Ascending aorta (tissue), 2 donors: ENCODE measurements at regions of chr12 and their contacts with region 1.

Region 1: GRCh38 chr12:79420146-79420618 is 270.6 kb downstream of the PAWR start:
- DNase-seq: no peak
- H3K4me3 ChIP-seq: no peak overlapping the region
- H3K27ac ChIP-seq: peak overlapping the region; percentile 38 to 68
- H3K4me1 ChIP-seq: peaks cover 6 to 23% of the 10 kb centered on the region in 2 donors
- H3K27me3 ChIP-seq: no peaks in the 10 kb centered on the region
- CTCF ChIP-seq: peak; percentile 56 to 62 (median 59)

Region 2: GRCh38 chr12:79451978-79452377 is 31.8 kb after region 1 on chr12:
- intact Hi-C with region 1: loop called (anchors 1 kb)
- DNase-seq: peak; percentile 49 to 79
- H3K4me3 ChIP-seq: peak overlapping the region; percentile 27 to 29
- H3K27ac ChIP-seq: peak overlapping the region; percentile 32 to 62
- H3K4me1 ChIP-seq: peaks cover 3 to 26% of the 10 kb centered on the region in 2 donors
- H3K27me3 ChIP-seq: no peaks in the 10 kb centered on the region
- CTCF ChIP-seq: no peak

Region 3: DNA sequence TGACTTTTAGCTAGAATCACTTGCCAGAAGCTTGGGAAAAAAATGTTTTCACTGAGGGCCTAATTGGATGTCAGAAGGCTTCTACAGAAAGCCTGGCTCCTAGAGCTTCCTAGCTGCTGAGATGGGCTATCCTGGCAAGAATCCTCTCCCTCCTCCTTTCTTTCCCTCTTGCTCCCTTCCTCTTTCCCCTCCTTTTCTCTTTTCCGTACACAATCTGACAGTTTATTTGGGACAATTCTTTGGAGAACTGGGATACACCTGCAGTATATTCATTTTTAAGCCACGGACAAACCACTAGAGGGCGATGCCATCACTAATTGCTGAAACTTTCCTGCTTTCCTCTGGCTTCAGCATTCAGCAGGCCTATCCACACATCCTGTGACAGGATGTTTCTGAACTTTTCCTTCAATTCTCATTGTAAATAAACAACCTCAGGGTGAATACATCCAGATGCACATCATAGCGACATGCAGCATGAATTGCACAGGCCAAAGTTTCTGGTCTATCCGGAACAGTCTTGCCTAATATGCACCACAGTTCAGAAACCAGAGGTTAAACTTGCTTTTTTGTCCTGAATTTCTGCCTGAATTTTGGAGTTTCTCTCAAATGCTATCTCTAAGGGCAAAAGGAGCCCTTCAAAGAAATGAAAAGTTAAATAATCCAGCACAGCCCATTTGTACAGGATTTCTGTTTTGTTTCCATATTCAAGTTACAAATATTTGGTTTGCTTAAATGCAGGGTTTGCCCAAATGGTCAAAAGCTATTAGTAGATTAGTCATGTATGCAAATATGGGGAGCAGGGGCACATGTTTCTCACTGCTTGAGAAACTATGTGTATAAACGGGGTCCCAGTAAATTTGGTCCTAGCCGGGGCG is 127.8 kb after region 1 on chr12:
- intact Hi-C with region 1: loop called (anchors 1 kb)
- DNase-seq: no peak
- H3K4me3 ChIP-seq: no peak overlapping the region
- H3K27ac ChIP-seq: peak overlapping the region; percentile 83
- H3K4me1 ChIP-seq: peaks cover 18 to 42% of the 10 kb centered on the region in 2 donors
- H3K27me3 ChIP-seq: no peaks in the 10 kb centered on the region
- CTCF ChIP-seq: peak; percentile 24 to 80 (median 68)

Region 4: GRCh38 chr12:79690638-79691493 is 270.7 kb after region 1 on chr12 and contains the start of gene PAWR:
- intact Hi-C with region 1: loop called (anchors 2 kb)
- DNase-seq: peak in 1 of 2 donors; percentile 81
- H3K4me3 ChIP-seq: peak within 1 kb of the TSS; percentile 96 to 99
- H3K27ac ChIP-seq: peak within 1 kb of the TSS; percentile 93 to 99
- H3K4me1 ChIP-seq: peaks cover 0 to 7% of the 10 kb centered on the region in 2 donors
- H3K27me3 ChIP-seq: no peaks in the 10 kb centered on the region
- CTCF ChIP-seq: peak; percentile 2 to 44 (median 3)
- total RNA-seq, gene PAWR: 75.4 TPM

Region 5: DNA sequence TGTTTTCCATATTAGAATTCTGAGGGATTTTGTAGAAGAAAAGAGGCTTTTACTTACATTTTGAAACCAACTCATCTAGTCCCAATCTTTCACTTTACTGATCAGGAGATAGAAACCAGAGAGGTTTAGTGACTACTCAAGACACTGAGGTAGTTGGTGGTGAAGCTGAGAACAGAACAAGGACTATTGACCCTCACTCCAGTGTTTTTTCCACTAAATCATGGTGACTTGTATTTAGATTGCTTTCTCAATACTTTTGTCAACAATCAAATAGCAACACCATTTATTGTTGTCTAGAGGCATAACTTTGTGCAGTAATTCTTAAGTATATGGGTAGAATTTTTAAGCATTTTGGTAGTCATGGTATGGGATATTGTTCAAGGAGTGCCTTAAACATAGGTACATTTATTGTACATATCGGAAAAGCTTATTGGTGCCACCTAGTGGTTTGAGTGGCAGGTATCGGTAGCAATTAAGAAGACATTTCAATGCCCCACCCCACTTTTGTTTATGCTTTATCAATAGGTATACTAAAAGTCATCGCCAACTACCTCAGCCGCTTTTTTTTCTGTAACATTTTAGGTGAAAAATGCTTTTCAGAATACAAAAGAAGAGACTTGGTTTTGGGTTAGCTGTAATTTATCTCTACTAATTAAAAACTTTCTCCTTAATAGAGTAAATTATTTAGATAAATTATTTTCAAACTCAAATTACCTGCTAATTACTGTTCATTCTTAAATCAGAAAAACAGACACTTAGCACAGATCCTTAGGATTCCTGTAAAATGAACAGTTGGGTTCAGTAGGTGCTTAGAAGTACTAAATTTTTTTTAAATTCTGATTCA is 317.9 kb after region 1 on chr12:
- intact Hi-C with region 1: loop called (anchors 5 kb)
- DNase-seq: no peak
- H3K4me3 ChIP-seq: no peak overlapping the region
- H3K27ac ChIP-seq: no peak overlapping the region
- H3K4me1 ChIP-seq: no peaks in the 10 kb centered on the region
- H3K27me3 ChIP-seq: no peaks in the 10 kb centered on the region
- CTCF ChIP-seq: peak; percentile 39 to 67 (median 40)

Region 6: GRCh38 chr12:79935021-79935623 is 514.9 kb after region 1 on chr12 and contains the start of gene PPP1R12A:
- intact Hi-C with region 1: loop called (anchors 5 kb)
- DNase-seq: peak; percentile 83 to 98
- H3K4me3 ChIP-seq: peak within 1 kb of the TSS; percentile 75 to 93
- H3K27ac ChIP-seq: peak within 1 kb of the TSS; percentile 93 to 99
- H3K4me1 ChIP-seq: peaks cover 0 to 2% of the 10 kb centered on the region in 2 donors
- H3K27me3 ChIP-seq: no peaks in the 10 kb centered on the region
- CTCF ChIP-seq: peak in 1 of 3 experiments; percentile 8
- total RNA-seq, gene PPP1R12A: 374 TPM

Region 7: DNA sequence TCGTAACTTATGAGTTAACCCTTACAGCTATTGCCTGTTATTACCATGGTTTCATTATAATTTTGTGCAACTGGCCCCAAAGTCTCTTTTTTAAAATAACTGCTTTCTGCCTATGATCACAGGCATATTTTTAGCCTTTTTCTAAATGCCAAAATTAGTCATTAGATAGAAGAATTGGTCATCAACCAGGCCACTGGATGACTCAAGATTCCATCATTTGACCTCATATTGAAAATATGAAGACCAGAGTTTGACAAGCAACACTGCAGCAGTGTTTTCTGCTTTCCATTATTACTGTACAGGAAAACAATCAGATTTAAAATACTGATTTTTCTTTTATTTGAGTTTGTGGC is 624.5 kb after region 1 on chr12:
- intact Hi-C with region 1: loop called (anchors 10 kb)
- DNase-seq: no peak
- H3K4me3 ChIP-seq: no peak overlapping the region
- H3K27ac ChIP-seq: peak overlapping the region; percentile 79 to 80
- H3K4me1 ChIP-seq: peaks cover 0 to 14% of the 10 kb centered on the region in 2 donors
- H3K27me3 ChIP-seq: no peaks in the 10 kb centered on the region
- CTCF ChIP-seq: no peak